HepG2 (cell line): ENCODE measurements at regions of chr1 and their contacts with region 1.

Region 1: GRCh38 chr1:211578640-211579433 is at the start of gene SLC30A1:
- DNase-seq: peak; percentile 93
- ATAC-seq: peak; percentile 83
- H3K4me3 ChIP-seq: peak within 1 kb of the TSS; percentile 84 to 96 (median 87)
- H3K27ac ChIP-seq: peak within 1 kb of the TSS; percentile 84
- H3K4me1 ChIP-seq: peaks cover 62% of the 10 kb centered on the region
- H3K27me3 ChIP-seq: peaks cover 0 to 2% of the 10 kb centered on the region in 2 experiments; a peak in 3 of 5 replicates
- CTCF ChIP-seq: no peak
- EP300 ChIP-seq: no peak
- POLR2A ChIP-seq: peak; percentile 74 to 83
- RAD21 ChIP-seq: no peak; the same call in none of the 2 replicates
- total RNA-seq, gene SLC30A1: 24.4 and 26.8 TPM in 2 replicates

Region 2: DNA sequence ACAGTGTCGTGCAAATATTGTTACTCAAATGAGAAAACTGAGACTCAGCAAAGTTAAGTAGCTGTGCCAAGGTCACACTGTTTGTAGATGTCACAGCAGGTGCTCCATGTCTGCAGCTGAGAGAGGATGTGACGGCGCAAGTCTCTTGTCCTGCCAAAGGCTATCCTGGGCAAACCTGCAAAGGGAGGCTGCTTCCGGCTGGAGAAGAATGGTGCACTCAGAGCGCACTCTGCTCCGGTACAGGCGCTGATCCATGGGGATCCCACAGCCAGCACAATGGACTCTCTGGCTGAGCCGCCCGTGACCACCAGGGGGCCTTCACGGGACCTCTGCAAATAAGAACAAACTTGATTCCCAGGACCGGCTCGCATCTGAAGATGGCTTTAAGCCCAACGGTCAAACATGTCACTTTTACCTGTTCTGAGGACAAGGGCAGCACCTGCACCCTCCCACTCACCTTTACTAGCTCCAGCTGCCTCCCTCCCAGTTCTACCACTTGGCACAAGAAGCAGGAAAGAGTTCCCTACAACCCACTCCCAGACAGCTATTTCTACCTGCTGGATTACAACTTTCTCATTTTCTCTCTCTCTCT is 108.8 kb before region 1 on chr1:
- CTCF ChIA-PET with region 1: no interaction called
- POLR2A ChIA-PET with region 1: no interaction called
- in situ Hi-C with region 1: no loop called
- intact Hi-C with region 1: no loop called
- DNase-seq: peak; percentile 72
- ATAC-seq: peak; percentile 100
- H3K4me3 ChIP-seq: no peak overlapping the region
- H3K27ac ChIP-seq: no peak overlapping the region
- H3K4me1 ChIP-seq: peaks cover 6% of the 10 kb centered on the region; the same call in 1 of the 2 replicates
- H3K27me3 ChIP-seq: peaks cover 0 to 12% of the 10 kb centered on the region in 2 experiments; a peak in 2 of 5 replicates
- CTCF ChIP-seq: peak; percentile 91
- EP300 ChIP-seq: no peak
- POLR2A ChIP-seq: no peak
- RAD21 ChIP-seq: peak; percentile 50

Region 3: DNA sequence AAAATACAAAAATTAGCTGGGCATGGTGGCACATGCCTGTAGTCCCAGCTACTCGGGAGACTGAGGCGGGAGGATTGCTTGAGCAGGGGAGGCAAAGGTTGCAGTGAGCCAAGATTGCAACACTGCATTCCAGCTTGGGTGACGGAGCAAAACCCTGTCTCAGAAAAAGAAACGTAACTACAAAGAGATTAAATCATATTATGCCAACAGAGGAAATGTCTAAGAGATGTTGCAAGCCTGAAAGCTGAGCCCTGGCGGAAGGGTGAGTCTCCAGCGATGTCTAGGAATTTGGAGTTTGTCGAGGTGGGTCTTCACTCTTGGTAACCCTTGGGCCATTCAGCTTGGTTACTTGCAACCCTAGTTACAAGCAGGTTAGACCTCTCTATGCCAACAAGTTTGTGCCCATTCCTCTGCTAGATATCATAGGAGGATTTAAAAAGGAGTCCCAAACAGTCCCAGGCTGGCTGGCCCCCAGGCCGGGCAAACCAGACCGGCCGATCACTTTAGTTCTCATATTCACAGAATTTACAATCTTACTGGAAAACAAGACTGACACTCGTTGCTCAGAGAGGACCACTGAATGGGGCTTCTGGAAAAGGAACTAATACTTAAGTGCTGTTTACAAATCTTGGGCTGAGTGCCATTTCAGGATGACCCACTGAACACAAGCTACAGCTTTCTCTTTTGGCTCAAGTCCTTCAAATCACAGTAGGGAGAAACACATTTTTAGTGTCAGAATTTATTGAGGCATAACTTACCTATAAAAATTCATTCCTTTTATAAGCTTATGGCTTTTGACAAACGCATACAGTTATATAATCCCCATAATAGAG is 27.0 kb before region 1 on chr1:
- CTCF ChIA-PET with region 1: no interaction called
- POLR2A ChIA-PET with region 1: no interaction called
- in situ Hi-C with region 1: no loop called
- intact Hi-C with region 1: loop called (anchors 1 kb)
- DNase-seq: peak; percentile 19
- ATAC-seq: no peak; the same call in 2 of the 3 replicates
- H3K4me3 ChIP-seq: no peak overlapping the region
- H3K27ac ChIP-seq: no peak overlapping the region
- H3K4me1 ChIP-seq: peaks cover 36% of the 10 kb centered on the region
- H3K27me3 ChIP-seq: peaks cover 0 to 18% of the 10 kb centered on the region in 2 experiments; a peak in 2 of 5 replicates
- CTCF ChIP-seq: no peak
- EP300 ChIP-seq: no peak
- POLR2A ChIP-seq: no peak
- RAD21 ChIP-seq: no peak

Region 4: DNA sequence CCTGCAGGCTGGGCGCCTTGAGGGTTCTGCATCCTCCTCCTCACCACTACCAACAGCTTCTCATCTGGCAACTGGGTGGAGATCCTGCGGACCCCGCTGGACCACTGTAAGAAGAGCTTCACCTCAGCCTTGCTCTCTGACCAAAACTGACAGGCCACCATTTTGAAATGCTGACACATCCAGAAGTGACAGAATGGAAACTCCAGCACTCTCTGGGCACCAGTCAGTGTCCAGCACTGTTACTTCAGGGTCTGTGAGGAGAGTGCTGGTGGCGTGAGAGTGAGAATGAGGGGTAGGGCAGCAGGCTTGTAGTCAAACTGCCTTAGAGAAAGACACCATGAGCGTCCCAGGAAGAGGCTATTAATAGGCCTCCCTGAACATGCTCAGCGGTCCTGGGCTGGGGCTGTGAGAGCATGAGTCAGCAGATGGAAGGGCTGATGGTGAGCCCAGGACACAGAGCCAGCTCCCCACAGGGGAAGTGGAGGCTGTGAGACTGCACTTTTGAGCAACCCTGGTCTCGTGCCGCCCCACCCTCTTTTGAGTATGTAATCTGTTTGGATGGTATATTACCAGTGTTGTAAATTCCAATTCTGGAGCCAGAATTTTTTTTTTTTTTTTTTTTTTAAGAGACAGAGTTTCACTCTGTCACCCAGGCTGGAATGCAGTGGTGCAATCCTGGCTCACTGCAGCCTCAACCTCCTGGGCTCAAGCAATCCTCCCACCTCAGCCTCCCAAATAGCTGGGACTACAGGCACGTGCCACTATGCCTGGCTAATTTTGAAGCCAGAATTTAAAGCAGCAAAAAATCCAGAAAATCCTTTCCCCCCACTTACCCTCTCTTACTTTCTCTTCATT is 34.5 kb after region 1 on chr1:
- CTCF ChIA-PET with region 1: interaction called, 4 read pairs
- POLR2A ChIA-PET with region 1: interaction called, 79 read pairs
- in situ Hi-C with region 1: no loop called
- intact Hi-C with region 1: no loop called
- DNase-seq: peak; percentile 55
- ATAC-seq: peak; percentile 8; the same call in 1 of the 3 replicates
- H3K4me3 ChIP-seq: no peak overlapping the region
- H3K27ac ChIP-seq: no peak overlapping the region
- H3K4me1 ChIP-seq: peaks cover 85% of the 10 kb centered on the region
- H3K27me3 ChIP-seq: no peaks in the 10 kb centered on the region
- CTCF ChIP-seq: no peak
- EP300 ChIP-seq: no peak
- POLR2A ChIP-seq: no peak
- RAD21 ChIP-seq: no peak

Region 5: GRCh38 chr1:211625040-211625439 is 46.2 kb after region 1 on chr1:
- CTCF ChIA-PET with region 1: interaction called, 30 read pairs
- POLR2A ChIA-PET with region 1: interaction called, 14 read pairs
- in situ Hi-C with region 1: loop called (anchors 5 kb)
- intact Hi-C with region 1: loop called (anchors 1 kb)
- DNase-seq: peak; percentile 76
- ATAC-seq: peak; percentile 96
- H3K4me3 ChIP-seq: no peak overlapping the region
- H3K27ac ChIP-seq: no peak overlapping the region
- H3K4me1 ChIP-seq: peaks cover 40% of the 10 kb centered on the region
- H3K27me3 ChIP-seq: peaks cover 0 to 2% of the 10 kb centered on the region in 2 experiments; a peak in 1 of 5 replicates
- CTCF ChIP-seq: peak; percentile 85
- EP300 ChIP-seq: peak in 1 of 2 experiments; percentile 12; a peak in 1 of 4 replicates
- POLR2A ChIP-seq: no peak
- RAD21 ChIP-seq: peak; percentile 68; the same call in 1 of the 2 replicates

Region 6: DNA sequence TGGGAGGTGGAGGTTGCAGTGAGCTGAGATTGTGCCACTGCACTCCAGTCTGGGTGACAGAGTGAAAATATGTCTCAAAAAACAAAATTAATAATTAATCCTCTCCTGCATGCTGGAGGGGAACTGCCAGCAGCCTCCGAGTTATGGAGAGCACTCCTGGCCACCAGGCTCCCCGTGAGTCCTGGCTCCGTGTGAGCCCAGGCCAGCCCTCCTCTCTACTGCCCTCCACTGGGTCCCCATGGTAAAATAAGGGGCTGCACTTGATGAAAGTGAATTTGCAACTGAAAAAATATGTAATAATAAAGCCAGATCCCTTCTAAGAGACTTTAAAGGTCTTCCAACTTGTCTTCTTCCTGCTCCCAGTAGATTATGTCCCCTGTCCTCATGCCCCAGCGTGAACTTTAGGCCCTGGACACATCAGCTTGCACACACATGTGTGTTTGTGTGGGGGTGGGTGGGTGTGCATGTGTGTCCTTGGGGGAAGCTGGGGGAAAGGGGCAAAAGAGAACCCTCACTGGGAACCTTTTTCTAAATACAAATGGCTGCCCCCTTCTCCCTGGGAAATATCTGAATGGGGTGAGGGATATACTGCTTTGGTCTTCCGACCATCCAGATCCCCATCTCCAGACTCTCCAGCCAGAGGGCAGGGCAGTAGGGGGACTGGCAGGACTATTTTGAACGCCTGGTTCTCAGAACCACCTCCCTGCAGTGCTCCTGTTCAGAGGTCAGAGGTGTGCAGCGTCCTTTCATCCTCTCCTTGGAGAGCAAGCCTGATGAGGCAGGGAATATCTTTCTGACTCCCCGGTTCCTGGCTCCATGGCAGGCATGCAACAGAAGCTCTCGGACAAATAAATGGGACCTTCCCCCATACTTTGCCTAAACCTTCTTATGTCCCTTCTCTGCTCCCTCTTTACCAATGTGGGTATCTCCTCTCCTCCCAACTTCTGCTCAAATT is 70.4 kb after region 1 on chr1:
- CTCF ChIA-PET with region 1: interaction called, 25 read pairs
- POLR2A ChIA-PET with region 1: interaction called, 28 read pairs
- in situ Hi-C with region 1: loop called (anchors 5 kb)
- intact Hi-C with region 1: loop called (anchors 2 kb)
- DNase-seq: peak; percentile 68
- ATAC-seq: peak; percentile 93
- H3K4me3 ChIP-seq: no peak overlapping the region
- H3K27ac ChIP-seq: no peak overlapping the region
- H3K4me1 ChIP-seq: peaks cover 66% of the 10 kb centered on the region
- H3K27me3 ChIP-seq: no peaks in the 10 kb centered on the region; a peak in 1 of 5 replicates
- CTCF ChIP-seq: peak; percentile 70
- EP300 ChIP-seq: no peak
- POLR2A ChIP-seq: no peak
- RAD21 ChIP-seq: peak; percentile 81